ENCODE measurements at regions of chr19 and their contacts with region 1.

Region 1: DNA sequence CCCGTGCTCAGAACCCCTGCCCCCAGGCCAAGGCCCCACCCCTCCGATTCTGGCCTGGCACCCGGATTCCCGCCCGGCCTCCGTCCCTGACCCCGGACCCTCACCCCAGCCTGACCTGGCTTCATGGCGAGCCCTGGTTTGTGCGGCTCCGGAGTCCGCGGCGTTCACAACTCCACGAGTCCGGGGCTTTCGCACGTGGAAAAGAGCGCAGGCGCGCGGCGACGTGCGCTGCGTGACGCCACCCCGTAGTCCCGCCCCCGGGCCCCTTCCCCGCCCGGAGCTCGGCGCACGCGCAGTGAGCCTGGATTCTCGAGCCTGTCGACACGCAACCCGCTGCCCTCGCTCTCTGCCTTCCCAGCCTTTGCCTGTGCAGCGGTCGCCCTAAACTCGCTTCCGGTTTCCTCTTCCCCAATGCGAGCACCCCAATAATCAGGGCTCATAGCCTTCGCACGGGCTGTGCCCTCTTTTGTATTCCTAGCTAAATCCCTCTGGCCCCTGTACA is at the start of gene FBL:
- DNase-seq: peak; percentile 99
- CTCF ChIP-seq: no peak

Region 2: DNA sequence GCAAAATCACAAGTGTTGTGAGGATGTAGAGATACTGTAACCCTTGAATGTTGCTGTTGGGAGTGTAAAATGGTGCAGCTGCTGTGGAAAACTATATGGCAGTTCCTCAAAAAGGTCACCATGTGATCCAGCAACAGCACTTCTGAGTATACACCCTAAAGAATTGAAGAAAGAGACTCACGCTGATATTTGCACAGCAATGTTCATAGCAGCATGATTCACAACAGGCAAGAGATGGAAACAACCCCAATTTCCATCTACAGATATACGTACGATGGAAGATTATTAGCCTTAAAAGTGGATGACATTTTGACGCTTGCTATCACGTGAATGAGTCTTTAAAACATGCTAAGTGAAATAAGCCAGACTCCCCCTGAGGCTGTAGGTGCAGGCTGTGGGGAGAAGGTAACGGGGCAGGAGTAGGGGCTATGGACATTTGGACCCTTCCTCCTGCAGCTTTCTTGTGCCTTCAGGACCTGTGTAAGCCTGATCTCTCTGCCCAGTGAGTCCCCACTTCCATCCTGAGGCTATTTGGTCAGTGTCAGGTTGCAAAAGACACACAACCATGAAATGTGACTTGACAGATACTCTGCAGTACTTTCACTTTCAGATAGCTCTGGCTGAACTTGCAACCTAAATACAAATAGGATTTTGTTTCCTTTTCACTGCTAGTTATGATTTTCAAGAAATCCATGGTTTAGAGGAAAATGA is 288.6 kb before region 1 on chr19:
- in situ Hi-C with region 1: loop called (anchors 10 kb)
- DNase-seq: peak; percentile 34
- CTCF ChIP-seq: no peak

Measured in GM13976 (cell line).